H1 (cell line): ENCODE measurements at regions of chr16 and their contacts with region 1.

Region 1: GRCh38 chr16:57863434-57864160 is 61.3 kb upstream of the KIFC3 start:
- DNase-seq: peak in 1 of 2 experiments; percentile 49
- H3K4me3 ChIP-seq: 0 out of 8 replicates have a peak overlapping the region, but pooled peaks of 1 of the 4 experiments have one; percentile 13
- H3K27ac ChIP-seq: no peak overlapping the region
- H3K4me1 ChIP-seq: peaks cover 5 to 14% (median 8%) of the 10 kb centered on the region in 4 experiments
- H3K27me3 ChIP-seq: no peaks in the 10 kb centered on the region
- CTCF ChIP-seq: peak; percentile 33 to 65 (median 49)
- EP300 ChIP-seq: no peak
- POLR2A ChIP-seq: no peak
- RAD21 ChIP-seq: peak; percentile 70 to 80

Region 2: DNA sequence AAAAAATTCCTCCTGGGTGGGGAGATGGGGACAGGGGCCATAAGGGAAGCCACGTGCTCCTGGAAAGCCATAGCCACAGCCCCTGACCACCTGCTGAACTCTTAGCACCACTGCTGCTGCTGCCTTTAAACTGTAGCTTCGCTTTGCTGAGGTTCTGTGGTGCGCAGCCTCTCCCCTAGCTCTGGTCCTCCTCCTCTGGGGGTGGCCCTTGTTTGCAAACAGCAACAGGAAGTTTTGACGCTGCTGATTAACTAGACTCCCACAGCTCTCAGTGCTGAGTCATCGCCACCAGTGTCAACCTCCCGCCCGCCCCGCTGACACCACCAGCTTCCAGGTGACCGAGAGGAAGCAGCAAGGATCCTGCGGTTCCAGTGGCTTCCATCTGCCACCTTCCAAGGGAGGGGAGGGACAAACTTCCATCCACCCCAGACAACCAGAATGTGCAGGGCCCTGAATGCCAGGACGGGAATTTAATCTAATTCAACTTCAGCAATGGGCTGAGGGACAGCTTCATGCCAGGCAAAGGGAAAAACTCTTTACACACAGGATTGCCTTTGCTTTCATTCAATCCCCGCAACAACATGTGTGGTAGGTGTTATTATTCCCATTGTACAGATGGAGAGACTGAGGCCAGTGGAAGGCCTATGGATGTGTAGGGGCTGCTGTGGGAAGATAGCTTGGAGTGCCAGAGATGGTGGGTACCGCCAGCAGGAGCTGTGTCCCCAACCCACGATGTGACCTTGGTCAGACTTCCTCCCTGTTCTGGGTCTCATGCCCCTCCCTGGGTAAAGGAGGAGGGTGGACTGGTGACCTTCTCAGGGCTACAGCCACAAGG is 53.2 kb before region 1 on chr16:
- CTCF ChIA-PET with region 1: interaction called, 11 read pairs
- POLR2A ChIA-PET with region 1: no interaction called
- DNase-seq: no peak
- H3K4me3 ChIP-seq: no peak overlapping the region
- H3K27ac ChIP-seq: no peak overlapping the region
- H3K4me1 ChIP-seq: peaks cover 1 to 19% (median 10%) of the 10 kb centered on the region in 4 experiments; a peak in 5 of 7 replicates
- H3K27me3 ChIP-seq: peaks cover 0 to 2% (median 0%) of the 10 kb centered on the region in 4 experiments; a peak in 3 of 7 replicates
- CTCF ChIP-seq: no peak
- EP300 ChIP-seq: no peak
- POLR2A ChIP-seq: 0 out of 3 replicates have a peak, but pooled peaks of 1 of the 2 experiments have one; percentile 15
- RAD21 ChIP-seq: no peak

Region 3: GRCh38 chr16:57816334-57816745 is 47.3 kb before region 1 on chr16:
- CTCF ChIA-PET with region 1: interaction called, 16 read pairs
- POLR2A ChIA-PET with region 1: no interaction called
- DNase-seq: no peak
- H3K4me3 ChIP-seq: no peak overlapping the region
- H3K27ac ChIP-seq: no peak overlapping the region
- H3K4me1 ChIP-seq: peaks cover 0 to 14% (median 8%) of the 10 kb centered on the region in 4 experiments; a peak in 6 of 7 replicates
- H3K27me3 ChIP-seq: peaks cover 0 to 2% (median 0%) of the 10 kb centered on the region in 4 experiments; a peak in 3 of 7 replicates
- CTCF ChIP-seq: no peak
- EP300 ChIP-seq: peak in 1 of 2 experiments; percentile 43; a peak in 1 of 3 replicates
- POLR2A ChIP-seq: no peak
- RAD21 ChIP-seq: no peak; a peak in 1 of 4 replicates

Region 4: DNA sequence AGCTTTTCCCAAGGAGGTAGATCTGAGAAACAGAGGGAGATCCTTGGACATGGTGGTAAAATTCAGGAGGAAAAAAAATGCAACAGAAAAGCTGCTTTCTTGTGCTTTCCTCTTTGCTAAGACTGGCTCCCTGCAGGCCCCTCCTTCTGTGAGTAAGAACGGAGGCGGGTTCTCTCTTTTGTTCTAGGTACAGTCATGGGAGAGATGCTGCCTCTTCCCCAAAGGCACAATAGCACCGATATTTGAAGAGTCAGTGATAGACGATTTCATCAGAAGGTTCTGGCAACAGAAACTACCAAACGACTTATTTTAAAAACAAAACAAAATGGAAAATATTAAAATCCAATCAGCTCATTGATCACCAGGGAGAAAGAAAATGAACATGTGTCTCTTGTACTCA is 28.7 kb before region 1 on chr16:
- CTCF ChIA-PET with region 1: interaction called, 22 read pairs
- POLR2A ChIA-PET with region 1: interaction called, 3 read pairs
- DNase-seq: no peak
- H3K4me3 ChIP-seq: no peak overlapping the region
- H3K27ac ChIP-seq: no peak overlapping the region
- H3K4me1 ChIP-seq: peaks cover 6 to 12% (median 9%) of the 10 kb centered on the region in 4 experiments
- H3K27me3 ChIP-seq: no peaks in the 10 kb centered on the region
- CTCF ChIP-seq: no peak
- EP300 ChIP-seq: no peak
- POLR2A ChIP-seq: no peak
- RAD21 ChIP-seq: no peak

Region 5: DNA sequence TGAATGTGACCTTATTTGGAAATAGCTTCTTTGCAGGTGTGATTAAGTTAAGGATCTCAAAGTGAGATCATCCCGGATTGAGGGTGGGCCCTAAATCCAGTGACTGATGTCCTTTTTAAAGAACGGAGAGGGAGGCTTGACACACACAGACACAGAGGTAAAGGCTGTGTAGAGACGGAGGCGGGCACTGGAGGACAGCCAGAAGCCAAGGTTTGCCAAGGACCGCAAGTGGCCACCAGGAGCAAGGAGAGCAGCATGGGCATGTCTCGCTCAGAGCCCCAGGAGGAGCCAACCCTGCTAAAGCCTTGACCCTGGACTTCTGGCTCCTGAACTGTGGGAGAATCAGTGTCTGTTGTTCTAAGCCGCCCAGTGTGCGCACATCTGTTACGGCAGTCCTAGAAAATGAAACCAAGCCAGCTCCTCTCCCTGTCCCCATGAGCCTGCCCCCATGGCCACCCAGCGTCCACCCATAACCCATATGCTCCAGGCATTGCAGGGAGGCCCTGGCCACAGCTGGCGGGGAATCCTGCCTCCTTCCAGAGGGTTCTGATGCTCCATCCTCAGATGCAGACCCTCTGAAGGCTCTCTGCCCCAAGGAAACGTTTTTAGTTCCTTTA is 92.1 kb after region 1 on chr16:
- CTCF ChIA-PET with region 1: no interaction called
- POLR2A ChIA-PET with region 1: no interaction called
- DNase-seq: no peak
- H3K4me3 ChIP-seq: no peak overlapping the region
- H3K27ac ChIP-seq: no peak overlapping the region; the same call in 1 of the 2 replicates
- H3K4me1 ChIP-seq: peaks cover 0 to 10% (median 5%) of the 10 kb centered on the region in 4 experiments; a peak in 6 of 7 replicates
- H3K27me3 ChIP-seq: no peaks in the 10 kb centered on the region; a peak in 1 of 7 replicates
- CTCF ChIP-seq: peak in 2 of 3 experiments; percentile 5 to 12; a peak in 2 of 4 replicates
- EP300 ChIP-seq: no peak
- POLR2A ChIP-seq: no peak
- RAD21 ChIP-seq: no peak